Common myeloid progenitor, CD34-positive (primary cell): ENCODE measurements at regions of chr3 and their contacts with region 1.

Region 1: DNA sequence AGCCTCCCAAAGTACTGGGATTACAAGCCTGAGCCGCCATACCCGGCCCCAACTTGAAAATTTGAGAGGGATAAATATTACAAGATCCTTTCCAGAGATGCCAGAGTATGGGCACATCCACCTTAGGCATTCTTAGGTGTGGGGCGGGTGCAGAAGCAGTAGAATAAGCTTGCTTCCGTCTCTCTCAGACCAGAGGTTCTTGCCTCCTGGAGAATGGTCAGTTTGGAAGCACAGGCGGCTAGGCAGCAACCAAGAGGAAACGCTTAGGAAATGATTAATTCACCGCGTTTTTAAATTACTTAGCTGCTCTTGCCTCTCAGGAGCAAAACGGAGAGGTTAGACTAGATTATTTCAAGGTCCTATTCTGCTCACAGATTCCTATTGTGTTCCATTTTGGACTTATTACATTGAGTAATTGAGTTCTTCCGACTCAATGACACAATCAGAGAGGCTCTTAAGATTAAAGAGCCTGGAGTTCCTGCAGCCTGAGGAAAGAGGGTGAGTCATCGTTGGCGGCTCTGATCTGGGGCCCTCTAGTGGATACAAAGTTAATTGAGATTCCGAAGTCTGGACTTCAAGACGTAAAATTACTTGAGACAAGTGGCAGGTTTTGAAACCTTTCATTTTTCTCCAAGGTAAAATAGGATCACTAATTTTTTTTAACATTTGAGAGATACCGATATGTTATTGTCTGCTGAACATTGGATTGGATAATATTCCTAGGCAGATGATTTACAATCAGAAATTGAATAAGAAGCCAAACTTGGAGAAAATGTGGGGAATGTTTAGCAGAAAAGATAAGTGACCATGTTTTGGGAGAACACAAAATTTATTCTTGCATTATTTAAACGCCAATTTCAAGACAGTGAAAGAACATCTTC is 5.8 kb upstream of the TOPAZ1 start:
- DNase-seq: peak; percentile 88 to 93 (median 92)
- H3K4me3 ChIP-seq: peak overlapping the region in 2 of 7 experiments; percentile 34 to 45
- H3K27ac ChIP-seq: peak overlapping the region in 1 of 2 experiments; percentile 59
- H3K4me1 ChIP-seq: peaks cover 2 to 24% (median 15%) of the 10 kb centered on the region in 4 experiments
- H3K27me3 ChIP-seq: no peaks in the 10 kb centered on the region

Region 2: DNA sequence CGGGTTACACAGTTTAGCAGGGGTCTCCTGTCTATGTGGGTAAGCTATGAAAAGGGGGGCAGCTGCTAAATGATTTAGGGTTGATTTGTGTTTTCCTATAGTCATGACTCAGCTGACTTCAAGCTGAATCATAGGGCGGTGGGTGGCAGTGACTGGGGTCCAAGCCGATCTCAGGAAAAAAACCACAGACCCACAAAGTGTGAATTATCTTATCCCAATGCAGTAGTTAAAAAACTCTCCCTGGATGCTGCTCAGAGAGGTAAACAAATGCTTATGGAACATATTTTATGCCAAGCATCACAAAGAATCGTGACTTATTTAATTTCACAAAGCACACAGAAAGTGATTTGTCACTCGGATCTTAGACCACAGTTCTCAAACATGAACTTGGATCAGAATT is 12.5 kb before region 1 on chr3:
- CTCF ChIA-PET with region 1: interaction called, 15 read pairs
- POLR2A ChIA-PET with region 1: no interaction called
- DNase-seq: peak; percentile 26 to 86 (median 77)
- H3K4me3 ChIP-seq: no peak overlapping the region
- H3K27ac ChIP-seq: no peak overlapping the region
- H3K4me1 ChIP-seq: peaks cover 0 to 16% (median 4%) of the 10 kb centered on the region in 4 experiments
- H3K27me3 ChIP-seq: no peaks in the 10 kb centered on the region